ENCODE measurements at regions of chr21 and their contacts with region 1.

Region 1: GRCh38 chr21:29002442-29003144 is 9.9 kb upstream of the LTN1 start:
- DNase-seq: peak; percentile 96 to 100 (median 98)

Region 2: DNA sequence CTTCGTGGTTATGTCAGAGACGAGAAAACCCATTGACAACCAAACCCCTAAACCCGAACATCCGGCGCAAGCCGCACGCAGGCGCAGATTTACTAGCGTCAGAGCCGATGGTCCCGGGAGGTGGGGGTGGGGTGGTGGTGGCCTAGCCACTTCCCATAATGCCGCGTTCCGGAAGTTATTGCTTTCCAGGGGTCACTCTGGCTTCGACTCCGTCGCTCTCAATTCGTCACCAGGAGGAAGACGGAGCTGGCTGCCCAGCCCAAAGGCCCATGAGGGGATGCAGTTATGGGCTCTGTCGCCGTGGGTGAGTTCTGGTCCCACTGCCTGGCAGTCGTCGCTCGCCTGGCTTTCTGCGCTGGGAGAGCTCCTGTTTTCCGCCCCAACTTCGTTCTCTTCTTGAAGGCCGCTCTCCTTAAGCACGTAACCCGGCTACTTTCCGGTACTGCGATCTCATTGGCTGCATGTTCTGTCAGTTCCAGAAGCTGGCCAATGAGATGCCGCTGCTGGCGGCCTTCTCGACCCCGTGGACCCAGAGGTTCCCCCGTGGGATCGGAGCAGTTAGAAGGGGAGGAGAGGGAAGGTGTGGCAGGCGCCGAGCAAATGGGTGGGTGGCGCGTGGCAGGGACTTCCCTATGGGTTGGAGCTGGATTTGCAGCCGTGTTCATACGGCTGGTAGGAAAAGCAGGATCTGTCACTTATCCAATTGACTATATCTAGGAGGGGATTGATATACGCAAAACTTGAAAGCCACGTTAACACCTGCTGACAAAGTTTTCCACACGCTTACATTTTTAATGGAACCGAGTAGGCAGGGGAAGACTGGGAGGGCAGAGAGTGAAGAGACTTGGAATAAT is 22.1 kb after region 1 on chr21 and contains the start of gene USP16:
- intact Hi-C with region 1: loop called (anchors 1 kb)
- DNase-seq: peak; percentile 92 to 99 (median 94)

Measured in posterior cingulate gyrus (tissue), 11 donors.